HCT116 (cell line): ENCODE measurements at regions of chr12 and their contacts with region 1.

Region 1: DNA sequence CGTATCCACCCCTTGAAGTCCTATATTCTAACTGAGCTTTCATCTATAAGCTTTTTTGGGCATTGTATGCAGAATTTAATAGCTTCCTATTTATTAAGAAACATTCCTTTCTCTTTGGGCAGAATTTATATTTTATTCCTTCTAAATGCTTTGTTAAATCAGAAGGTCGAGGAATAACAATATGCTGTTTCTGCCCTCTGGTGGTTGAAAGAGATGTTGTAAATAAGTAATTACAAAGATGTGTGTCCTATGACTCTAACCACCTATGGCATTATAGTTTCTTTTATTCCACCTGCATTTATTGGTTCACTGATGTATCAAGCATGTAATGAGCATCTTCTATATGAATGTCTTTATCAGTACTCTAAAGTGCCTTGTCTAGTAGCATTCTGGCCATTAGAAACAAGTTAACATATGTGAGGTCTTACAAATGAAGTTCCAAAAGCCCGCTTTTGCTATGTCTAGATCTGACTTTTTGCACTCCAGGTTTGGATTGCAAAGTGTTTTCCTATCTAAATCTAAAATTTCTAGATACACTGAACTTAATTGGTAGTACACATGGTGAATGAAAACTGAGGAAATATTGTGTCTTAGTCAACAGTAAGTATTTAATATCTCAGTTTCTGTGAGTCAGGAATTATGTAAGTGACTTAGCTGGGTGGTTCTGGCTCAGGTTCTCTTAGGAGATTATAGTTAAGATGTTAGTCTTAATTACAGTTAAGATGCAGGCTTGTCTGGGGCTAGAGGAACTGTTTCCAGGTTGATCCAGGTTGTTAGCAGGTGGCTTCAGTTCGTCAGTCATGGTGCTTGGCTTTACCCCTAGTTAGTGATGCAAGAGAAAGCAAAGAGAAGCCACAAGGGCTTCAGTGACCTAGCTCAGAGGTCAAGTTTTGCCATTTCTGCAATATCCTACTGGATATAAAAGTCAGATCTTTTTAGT is 57.5 kb downstream of the PLEKHA5 start:
- DNase-seq: peak; percentile 31
- ATAC-seq: peak; percentile 64; the same call in 1 of the 2 replicates
- H3K4me3 ChIP-seq: no peak overlapping the region
- H3K27ac ChIP-seq: no peak overlapping the region
- H3K4me1 ChIP-seq: no peaks in the 10 kb centered on the region
- H3K27me3 ChIP-seq: no peaks in the 10 kb centered on the region
- CTCF ChIP-seq: peak; percentile 47 to 80 (median 51); a peak in 5 of 6 replicates
- POLR2A ChIP-seq: no peak
- RAD21 ChIP-seq: peak; percentile 77

Region 2: GRCh38 chr12:18250313-18250916 is 936.6 kb before region 1 on chr12:
- CTCF ChIA-PET with region 1: interaction called, 10 read pairs
- POLR2A ChIA-PET with region 1: no interaction called
- RAD21 ChIA-PET with region 1: no interaction called
- intact Hi-C with region 1: loop called (anchors 2 kb)
- DNase-seq: peak; percentile 54
- ATAC-seq: peak; percentile 57; the same call in 1 of the 2 replicates
- H3K4me3 ChIP-seq: no peak overlapping the region
- H3K27ac ChIP-seq: no peak overlapping the region
- H3K4me1 ChIP-seq: no peaks in the 10 kb centered on the region
- H3K27me3 ChIP-seq: no peaks in the 10 kb centered on the region
- CTCF ChIP-seq: peak; percentile 55 to 71 (median 58); a peak in 5 of 6 replicates
- POLR2A ChIP-seq: no peak
- RAD21 ChIP-seq: peak; percentile 74

Region 3: DNA sequence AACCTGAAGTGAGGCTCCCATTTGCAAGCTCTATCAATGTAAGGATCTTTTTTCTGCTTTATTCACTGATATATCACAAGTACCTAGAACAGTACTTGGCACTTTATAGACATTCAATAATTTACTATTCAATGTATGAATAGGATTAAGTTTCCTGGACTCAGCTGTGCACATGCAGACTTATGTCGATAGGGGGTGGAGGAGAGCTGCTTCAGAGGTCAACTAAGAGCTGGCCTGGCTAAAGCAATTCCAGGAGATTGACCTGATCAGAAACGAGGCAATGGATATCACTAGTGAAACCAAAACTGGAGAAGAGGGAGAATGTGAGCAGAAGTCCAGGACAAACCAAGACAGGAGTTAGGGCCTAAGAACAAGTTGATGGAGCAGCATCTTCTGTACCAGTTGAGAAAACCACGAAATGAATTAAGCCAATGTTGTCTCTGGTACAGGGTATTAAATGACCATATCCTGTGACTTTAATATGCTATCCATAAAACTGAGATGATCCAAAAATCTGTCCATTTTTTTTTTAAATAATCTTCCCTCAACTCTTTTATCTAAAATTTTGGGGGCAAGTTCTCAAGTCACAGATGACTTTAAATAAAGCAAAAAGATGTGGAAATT is 756.5 kb before region 1 on chr12:
- CTCF ChIA-PET with region 1: interaction called, 7 read pairs
- POLR2A ChIA-PET with region 1: no interaction called
- RAD21 ChIA-PET with region 1: no interaction called
- intact Hi-C with region 1: loop called (anchors 2 kb)
- DNase-seq: peak; percentile 38
- ATAC-seq: peak; percentile 97
- H3K4me3 ChIP-seq: no peak overlapping the region
- H3K27ac ChIP-seq: no peak overlapping the region
- H3K4me1 ChIP-seq: peaks cover 0 to 4% of the 10 kb centered on the region in 2 experiments; a peak in 1 of 4 replicates
- H3K27me3 ChIP-seq: no peaks in the 10 kb centered on the region
- CTCF ChIP-seq: peak; percentile 37 to 87 (median 86); a peak in 5 of 6 replicates
- POLR2A ChIP-seq: no peak
- RAD21 ChIP-seq: peak; percentile 73

Region 4: DNA sequence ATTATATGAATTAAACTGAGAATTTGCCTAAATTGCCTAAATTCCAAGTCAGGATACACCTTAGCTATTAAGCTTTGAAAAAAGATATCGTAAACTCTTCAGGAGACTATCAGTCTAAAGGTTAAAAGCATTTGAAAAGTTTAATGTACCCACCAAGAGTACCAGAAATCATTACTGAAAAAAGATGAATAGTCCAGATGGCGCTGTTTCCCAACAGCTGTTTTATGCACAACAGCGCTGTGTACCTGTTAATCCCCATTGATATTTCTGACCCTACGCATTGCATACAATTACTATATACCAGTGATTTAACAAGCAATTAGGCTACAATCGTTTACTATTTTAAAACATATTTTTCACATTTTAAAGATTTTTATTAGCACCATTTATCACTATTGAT is 634.2 kb before region 1 on chr12:
- CTCF ChIA-PET with region 1: no interaction called
- POLR2A ChIA-PET with region 1: no interaction called
- RAD21 ChIA-PET with region 1: no interaction called
- intact Hi-C with region 1: loop called (anchors 10 kb)
- DNase-seq: no peak
- ATAC-seq: peak; percentile 53; the same call in 1 of the 2 replicates
- H3K4me3 ChIP-seq: no peak overlapping the region
- H3K27ac ChIP-seq: no peak overlapping the region
- H3K4me1 ChIP-seq: no peaks in the 10 kb centered on the region
- H3K27me3 ChIP-seq: no peaks in the 10 kb centered on the region
- CTCF ChIP-seq: peak; percentile 12 to 55 (median 31); a peak in 3 of 6 replicates
- POLR2A ChIP-seq: no peak
- RAD21 ChIP-seq: peak; percentile 56

Region 5: GRCh38 chr12:18861287-18861858 is 325.6 kb before region 1 on chr12:
- CTCF ChIA-PET with region 1: interaction called, 10 read pairs
- POLR2A ChIA-PET with region 1: no interaction called
- RAD21 ChIA-PET with region 1: no interaction called
- intact Hi-C with region 1: loop called (anchors 1 kb)
- DNase-seq: peak; percentile 47
- ATAC-seq: peak; percentile 72
- H3K4me3 ChIP-seq: no peak overlapping the region
- H3K27ac ChIP-seq: no peak overlapping the region
- H3K4me1 ChIP-seq: peaks cover 0 to 6% of the 10 kb centered on the region in 2 experiments; a peak in 1 of 4 replicates
- H3K27me3 ChIP-seq: no peaks in the 10 kb centered on the region
- CTCF ChIP-seq: peak; percentile 57 to 74 (median 67); a peak in 5 of 6 replicates
- POLR2A ChIP-seq: no peak
- RAD21 ChIP-seq: peak; percentile 69

Region 6: DNA sequence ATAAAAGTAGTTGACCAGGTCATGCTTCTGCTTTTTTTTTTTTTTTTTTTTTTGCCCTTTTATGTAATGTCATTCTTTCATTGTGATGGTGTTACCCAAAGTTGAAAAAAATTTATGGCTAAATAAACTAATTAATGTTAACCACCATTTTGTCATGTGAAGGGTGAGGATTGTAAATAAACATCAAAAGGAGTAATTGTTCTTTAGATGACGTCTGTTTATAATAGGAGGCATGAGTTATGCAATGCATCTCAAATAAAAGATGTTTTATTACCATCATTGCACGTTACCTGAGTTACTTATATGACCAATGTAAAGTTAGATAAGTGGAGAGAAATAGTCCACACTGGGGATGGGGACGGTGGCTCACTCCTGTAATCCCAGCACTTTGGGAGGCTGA is 831.4 kb after region 1 on chr12:
- CTCF ChIA-PET with region 1: no interaction called
- POLR2A ChIA-PET with region 1: no interaction called
- RAD21 ChIA-PET with region 1: no interaction called
- intact Hi-C with region 1: no loop called
- DNase-seq: no peak
- ATAC-seq: no peak
- H3K4me3 ChIP-seq: no peak overlapping the region
- H3K27ac ChIP-seq: no peak overlapping the region
- H3K4me1 ChIP-seq: no peaks in the 10 kb centered on the region
- H3K27me3 ChIP-seq: no peaks in the 10 kb centered on the region
- CTCF ChIP-seq: no peak
- POLR2A ChIP-seq: no peak
- RAD21 ChIP-seq: no peak

Region 7: DNA sequence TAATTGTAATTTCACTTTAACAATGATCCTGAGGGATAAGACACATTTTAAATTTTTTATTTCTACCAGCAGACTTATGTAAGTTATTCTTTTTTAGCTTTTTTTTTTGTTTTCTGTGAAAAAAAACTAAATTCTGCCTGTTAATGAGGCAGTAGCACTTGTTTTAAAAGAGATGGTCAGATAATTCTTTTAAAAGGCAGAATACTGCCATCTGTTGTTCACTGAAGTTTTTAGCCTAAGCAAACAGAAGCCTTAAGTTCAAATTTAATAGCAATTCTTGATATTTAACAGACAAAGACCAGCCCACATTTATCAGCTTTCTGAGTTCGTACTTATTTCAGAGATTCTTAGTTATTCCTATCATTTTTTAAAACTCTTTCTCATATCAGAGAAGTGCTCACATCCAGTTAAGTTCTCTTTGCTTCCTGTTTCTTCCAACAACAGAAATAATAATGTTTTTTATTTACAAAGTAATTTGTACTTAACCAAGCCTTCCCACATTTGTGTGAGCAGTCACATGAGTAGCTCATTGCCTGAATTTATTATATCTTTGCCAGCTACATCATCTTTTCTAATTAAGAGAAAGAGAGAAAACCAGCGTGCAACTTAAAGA is 1414.8 kb after region 1 on chr12:
- CTCF ChIA-PET with region 1: no interaction called
- POLR2A ChIA-PET with region 1: no interaction called
- RAD21 ChIA-PET with region 1: no interaction called
- intact Hi-C with region 1: no loop called
- DNase-seq: peak; percentile 46
- ATAC-seq: 0 out of 2 replicates have a peak, but pooled peaks have one; percentile 40
- H3K4me3 ChIP-seq: no peak overlapping the region
- H3K27ac ChIP-seq: no peak overlapping the region
- H3K4me1 ChIP-seq: no peaks in the 10 kb centered on the region
- H3K27me3 ChIP-seq: no peaks in the 10 kb centered on the region
- CTCF ChIP-seq: peak; percentile 30 to 56 (median 46); a peak in 4 of 6 replicates
- POLR2A ChIP-seq: no peak
- RAD21 ChIP-seq: peak; percentile 65